Cardiac septum (tissue), 1 donor: ENCODE measurements at regions of chr9 and their contacts with region 1.

Region 1: GRCh38 chr9:37938121-37938891 is 34.4 kb upstream of the SLC25A51 start:
- DNase-seq: no peak

Region 2: GRCh38 chr9:37984672-37985611 is 46.6 kb after region 1 on chr9:
- intact Hi-C with region 1: loop called (anchors 2 kb)
- DNase-seq: peak; percentile 83

Region 3: DNA sequence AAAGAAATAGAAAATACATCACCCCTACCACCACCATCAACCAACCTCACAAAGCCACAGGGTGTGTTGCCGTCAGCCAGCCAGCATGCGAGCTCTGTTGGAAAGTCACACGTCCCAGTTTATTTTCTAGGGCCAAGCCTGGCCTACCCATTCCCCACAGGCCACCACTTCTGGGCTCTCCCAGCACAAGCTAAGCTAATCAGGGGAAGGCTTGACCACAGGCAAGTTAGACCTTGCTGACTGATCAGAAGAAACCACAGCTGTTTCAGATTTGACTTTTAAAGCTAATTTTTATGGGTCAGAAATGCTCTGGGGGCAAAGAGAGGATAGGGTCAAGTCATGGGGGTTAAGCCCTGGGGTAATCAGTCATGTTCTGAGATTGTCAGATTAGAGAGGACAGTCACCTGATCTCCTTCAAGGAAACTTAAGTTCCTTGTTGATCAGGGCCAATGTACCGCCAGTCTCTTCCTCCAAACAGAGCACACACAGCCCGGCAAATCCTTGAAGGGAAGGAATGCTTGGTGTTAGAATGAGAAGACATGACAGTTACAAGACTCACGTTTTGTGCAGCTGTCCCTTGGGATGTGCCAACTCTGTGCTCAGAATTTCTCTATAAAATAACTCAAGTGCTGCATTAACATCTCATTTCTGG is 123.1 kb after region 1 on chr9:
- intact Hi-C with region 1: loop called (anchors 5 kb)
- DNase-seq: peak; percentile 61